ENCODE measurements at regions of chr10 and their contacts with region 1.

Region 1: GRCh38 chr10:122703439-122704118 is 3.9 kb upstream of the C10orf120 start:
- DNase-seq: peak; percentile 54
- H3K4me3 ChIP-seq: no peak overlapping the region
- H3K27ac ChIP-seq: no peak overlapping the region
- H3K4me1 ChIP-seq: no peaks in the 10 kb centered on the region
- CTCF ChIP-seq: peak; percentile 89

Region 2: GRCh38 chr10:122267849-122268737 is 435.5 kb before region 1 on chr10:
- CTCF ChIA-PET with region 1: no interaction called
- POLR2A ChIA-PET with region 1: no interaction called
- intact Hi-C with region 1: loop called (anchors 10 kb)
- DNase-seq: peak; percentile 56
- H3K4me3 ChIP-seq: no peak overlapping the region
- H3K27ac ChIP-seq: no peak overlapping the region
- H3K4me1 ChIP-seq: no peaks in the 10 kb centered on the region
- CTCF ChIP-seq: peak; percentile 92

Region 3: GRCh38 chr10:122565728-122566206 is 137.8 kb before region 1 on chr10:
- CTCF ChIA-PET with region 1: no interaction called
- POLR2A ChIA-PET with region 1: no interaction called
- intact Hi-C with region 1: loop called (anchors 10 kb)
- DNase-seq: peak; percentile 57
- H3K4me3 ChIP-seq: no peak overlapping the region
- H3K27ac ChIP-seq: no peak overlapping the region
- H3K4me1 ChIP-seq: no peaks in the 10 kb centered on the region
- CTCF ChIP-seq: peak; percentile 84

Region 4: GRCh38 chr10:122648599-122649428 is 54.8 kb before region 1 on chr10:
- CTCF ChIA-PET with region 1: no interaction called
- POLR2A ChIA-PET with region 1: no interaction called
- intact Hi-C with region 1: loop called (anchors 2 kb)
- DNase-seq: peak; percentile 33
- H3K4me3 ChIP-seq: no peak overlapping the region
- H3K27ac ChIP-seq: no peak overlapping the region
- H3K4me1 ChIP-seq: no peaks in the 10 kb centered on the region
- CTCF ChIP-seq: peak; percentile 82

Measured in OCI-LY7 (cell line).